ENCODE measurements at regions of chr2 and their contacts with region 1.

Region 1: DNA sequence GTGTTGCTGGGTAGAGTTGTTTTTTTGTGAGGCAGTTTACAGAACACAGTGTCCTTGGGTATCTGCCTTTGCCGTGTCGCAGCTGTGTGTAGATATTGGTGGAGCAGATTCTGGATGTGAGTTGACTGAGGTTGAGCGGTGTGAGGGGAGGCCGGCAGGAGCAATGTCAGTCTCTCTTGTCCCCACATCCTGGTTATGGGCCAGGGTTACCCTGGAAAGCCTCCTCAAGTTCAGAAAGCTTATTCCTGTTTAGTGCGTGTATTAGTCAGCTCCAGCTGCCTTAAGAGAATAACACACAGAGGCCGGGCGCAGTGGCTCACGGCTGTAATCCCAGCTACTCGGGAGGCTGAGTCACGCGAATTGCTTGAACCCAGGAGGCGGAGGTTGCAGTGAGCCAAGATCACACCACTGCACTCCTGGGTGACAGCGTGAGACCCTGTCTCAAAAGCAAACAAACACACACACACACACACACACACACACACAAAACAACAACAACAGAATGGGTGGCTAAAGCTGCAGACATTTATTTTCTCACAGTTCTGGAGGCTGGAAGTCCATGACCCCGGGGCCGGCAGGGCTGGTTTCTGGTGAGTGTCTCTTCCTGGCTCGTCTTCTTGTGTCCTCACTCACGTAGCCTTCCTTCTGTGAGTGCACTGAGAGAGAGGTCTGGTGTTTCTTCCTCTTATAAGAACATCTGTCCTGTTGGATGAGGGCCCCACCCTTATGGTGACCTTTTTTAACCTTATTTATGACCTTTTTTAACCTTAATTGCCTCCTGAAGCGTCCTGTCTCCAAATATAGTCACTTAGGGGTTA is 5.1 kb downstream of the NCK2 start:
- DNase-seq: peak; percentile 78
- ATAC-seq: peak; percentile 23
- H3K4me3 Mint-ChIP-seq: peak overlapping the region; percentile 97
- H3K27ac Mint-ChIP-seq: peak overlapping the region; percentile 99
- H3K4me1 Mint-ChIP-seq: peaks cover 71% of the 10 kb centered on the region
- H3K27me3 Mint-ChIP-seq: no peaks in the 10 kb centered on the region

Region 2: GRCh38 chr2:105769504-105769903 is 19.7 kb after region 1 on chr2:
- CTCF ChIA-PET with region 1: interaction called, 5 read pairs
- POLR2A ChIA-PET with region 1: interaction called, 8 read pairs
- intact Hi-C with region 1: loop called in 1 of 2 experiments (anchors 2 kb)
- DNase-seq: peak; percentile 48
- ATAC-seq: peak; percentile 40
- H3K4me3 Mint-ChIP-seq: peak overlapping the region; percentile 46
- H3K27ac Mint-ChIP-seq: peak overlapping the region; percentile 92
- H3K4me1 Mint-ChIP-seq: peaks cover 96% of the 10 kb centered on the region
- H3K27me3 Mint-ChIP-seq: no peaks in the 10 kb centered on the region

Region 3: GRCh38 chr2:105789745-105790460 is 40.1 kb after region 1 on chr2:
- CTCF ChIA-PET with region 1: interaction called, 6 read pairs
- POLR2A ChIA-PET with region 1: interaction called, 24 read pairs
- intact Hi-C with region 1: loop called in 1 of 2 experiments (anchors 1 kb)
- DNase-seq: peak; percentile 83
- ATAC-seq: peak; percentile 90
- H3K4me3 Mint-ChIP-seq: peak overlapping the region; percentile 61
- H3K27ac Mint-ChIP-seq: peak overlapping the region; percentile 96
- H3K4me1 Mint-ChIP-seq: peaks cover 94% of the 10 kb centered on the region
- H3K27me3 Mint-ChIP-seq: no peaks in the 10 kb centered on the region

Region 4: DNA sequence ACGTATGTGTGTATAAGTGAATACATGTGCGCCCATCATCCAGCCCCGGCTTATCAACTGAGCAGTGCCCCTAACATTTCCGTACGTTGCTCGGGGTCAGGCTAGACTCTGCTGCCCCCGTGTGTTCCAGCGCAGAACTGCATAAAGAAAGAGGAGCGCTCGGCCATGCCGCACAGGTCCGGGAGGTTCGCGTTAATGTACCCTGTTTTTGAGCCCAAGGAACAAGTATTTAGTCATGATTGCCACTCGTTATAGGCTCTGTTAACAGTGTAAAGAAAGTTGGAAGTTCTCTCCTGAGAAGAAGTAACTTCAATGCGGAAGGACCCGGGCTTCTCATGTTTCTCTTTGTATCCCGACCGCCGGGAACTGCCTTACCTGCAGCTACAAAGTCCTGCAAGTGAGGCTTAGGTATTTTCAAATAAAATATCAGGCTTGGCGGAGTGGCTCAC is 793.0 kb after region 1 on chr2:
- CTCF ChIA-PET with region 1: no interaction called
- POLR2A ChIA-PET with region 1: no interaction called
- intact Hi-C with region 1: no loop called
- DNase-seq: peak; percentile 86
- ATAC-seq: peak; percentile 96
- H3K4me3 Mint-ChIP-seq: peak overlapping the region; percentile 34
- H3K27ac Mint-ChIP-seq: no peak overlapping the region
- H3K4me1 Mint-ChIP-seq: peaks cover 3% of the 10 kb centered on the region
- H3K27me3 Mint-ChIP-seq: peaks cover 13% of the 10 kb centered on the region

Measured in activated CD4-positive, alpha-beta T cell treated with anti-CD3 and anti-CD28 coated beads for 36 hours (primary cell).